HCT116 (cell line): ENCODE measurements at regions of chr17 and their contacts with region 1.

Region 1: GRCh38 chr17:71900621-71901229 is 220.1 kb upstream of the SOX9 start:
- DNase-seq: peak; percentile 81
- ATAC-seq: peak; percentile 94
- H3K4me3 ChIP-seq: peak overlapping the region; percentile 3 to 41; a peak in 2 of 4 replicates
- H3K27ac ChIP-seq: peak overlapping the region; percentile 37; the same call in 1 of the 2 replicates
- H3K4me1 ChIP-seq: peaks cover 25 to 49% of the 10 kb centered on the region in 2 experiments
- H3K27me3 ChIP-seq: no peaks in the 10 kb centered on the region
- CTCF ChIP-seq: no peak
- POLR2A ChIP-seq: no peak
- RAD21 ChIP-seq: no peak

Region 2: GRCh38 chr17:71402661-71403141 is 498.0 kb before region 1 on chr17:
- CTCF ChIA-PET with region 1: no interaction called
- POLR2A ChIA-PET with region 1: no interaction called
- RAD21 ChIA-PET with region 1: no interaction called
- intact Hi-C with region 1: loop called (anchors 10 kb)
- DNase-seq: no peak
- ATAC-seq: peak; percentile 47; the same call in 1 of the 2 replicates
- H3K4me3 ChIP-seq: no peak overlapping the region
- H3K27ac ChIP-seq: no peak overlapping the region
- H3K4me1 ChIP-seq: peaks cover 0 to 16% of the 10 kb centered on the region in 2 experiments; a peak in 2 of 4 replicates
- H3K27me3 ChIP-seq: no peaks in the 10 kb centered on the region
- CTCF ChIP-seq: no peak
- POLR2A ChIP-seq: no peak
- RAD21 ChIP-seq: no peak